Colonic mucosa (tissue), 4 donors: ENCODE measurements at regions of chr11 and their contacts with region 1.

Region 1: DNA sequence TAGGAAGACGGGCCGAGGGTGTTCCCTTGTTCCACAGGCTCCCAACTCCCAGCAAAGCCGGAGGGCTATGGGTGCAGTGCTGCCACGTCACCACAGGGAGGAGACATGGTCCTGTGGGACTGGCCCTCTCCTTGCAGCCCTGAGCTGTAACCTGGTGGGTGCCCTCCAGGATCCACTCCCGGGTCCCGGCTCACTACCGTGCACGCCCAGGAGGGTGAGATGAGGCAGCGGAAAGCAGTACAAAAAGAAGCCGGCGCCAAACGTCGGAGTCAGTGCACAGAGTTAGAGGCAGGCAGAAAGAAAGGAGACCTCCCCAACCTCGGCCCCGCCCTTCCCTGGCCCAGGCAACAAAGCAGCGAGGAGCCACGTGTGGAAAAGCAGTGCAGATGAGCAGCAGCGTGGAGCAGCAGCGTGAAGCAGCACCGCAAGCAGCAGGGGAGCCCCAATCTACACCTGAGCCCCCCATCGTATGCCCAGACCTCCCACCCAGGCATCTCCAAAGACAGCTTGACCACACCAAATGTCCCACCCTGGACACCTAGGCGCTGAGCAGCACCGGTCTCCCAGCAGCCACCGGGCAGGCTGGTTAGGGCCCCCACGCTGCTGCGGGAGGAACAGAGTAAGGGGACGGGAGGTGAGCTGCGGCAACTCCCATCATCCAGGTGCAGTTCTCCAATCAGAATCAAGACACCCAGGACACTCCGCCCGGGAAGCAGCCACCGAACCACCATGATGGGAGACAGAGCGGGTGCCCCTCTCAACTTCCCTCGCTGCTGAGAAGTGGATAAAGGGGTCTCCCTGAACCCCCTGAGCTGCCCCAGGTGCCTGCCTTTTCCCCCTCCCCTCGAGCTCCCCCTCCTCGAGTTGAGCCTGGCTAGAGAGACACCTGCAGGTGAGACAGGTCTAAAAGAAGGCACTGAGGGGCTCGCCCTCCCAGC is 28.8 kb downstream of the IGSF9B start:
- DNase-seq: peak; percentile 81
- H3K4me3 ChIP-seq: peak overlapping the region; percentile 28
- H3K27ac ChIP-seq: no peak overlapping the region
- H3K4me1 ChIP-seq: peaks cover 6% of the 10 kb centered on the region
- H3K27me3 ChIP-seq: no peaks in the 10 kb centered on the region
- CTCF ChIP-seq: peak; percentile 83

Region 2: GRCh38 chr11:133809569-133810491 is 118.1 kb before region 1 on chr11:
- intact Hi-C with region 1: no loop called
- DNase-seq: no peak
- H3K4me3 ChIP-seq: no peak overlapping the region
- H3K27ac ChIP-seq: no peak overlapping the region
- H3K4me1 ChIP-seq: no peaks in the 10 kb centered on the region
- H3K27me3 ChIP-seq: no peaks in the 10 kb centered on the region
- CTCF ChIP-seq: no peak

Region 3: DNA sequence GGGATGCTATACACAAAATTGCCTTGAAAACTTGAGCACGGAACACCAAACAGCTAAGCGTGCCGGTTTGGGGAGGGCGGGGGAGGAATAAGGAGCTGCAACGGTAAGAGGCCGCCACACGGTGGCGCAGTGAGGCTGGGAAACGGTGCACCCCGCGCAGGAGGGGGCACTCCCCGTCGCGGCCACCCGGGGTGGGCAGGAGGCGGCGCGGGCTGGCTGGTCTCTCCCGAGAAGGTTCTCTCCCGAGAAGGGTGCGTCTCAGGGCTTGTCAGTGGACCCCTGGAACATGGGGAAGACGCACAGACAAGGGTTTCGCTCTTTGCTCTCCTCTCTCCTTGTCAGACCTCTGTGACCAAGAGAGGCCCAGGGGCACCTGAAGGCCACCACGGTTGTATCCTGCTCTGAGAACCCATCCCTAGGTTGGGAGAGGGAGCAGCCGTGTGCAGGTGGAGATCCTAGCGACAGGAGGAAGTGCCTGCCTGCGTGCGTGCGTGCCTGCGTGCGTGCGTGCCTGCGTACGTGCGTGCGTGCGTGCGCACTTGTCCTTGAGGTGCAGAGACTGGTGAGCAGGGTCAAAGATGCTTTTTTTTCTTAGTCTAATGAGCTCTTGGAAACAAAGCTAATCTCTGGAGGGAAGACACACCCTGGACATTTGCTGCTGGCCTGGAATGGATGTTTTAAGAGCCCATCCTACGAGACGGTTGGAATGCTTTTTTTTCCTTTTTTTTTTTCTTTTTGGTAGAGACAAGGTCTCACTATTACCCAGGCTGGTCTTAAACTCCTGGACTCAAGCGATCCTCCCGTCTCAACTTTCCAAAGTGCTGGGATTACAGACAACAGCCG is 122.8 kb after region 1 on chr11:
- intact Hi-C with region 1: loop called (anchors 10 kb)
- DNase-seq: peak; percentile 87
- H3K4me3 ChIP-seq: peak overlapping the region; percentile 25
- H3K27ac ChIP-seq: peak overlapping the region; percentile 52
- H3K4me1 ChIP-seq: no peaks in the 10 kb centered on the region
- H3K27me3 ChIP-seq: no peaks in the 10 kb centered on the region
- CTCF ChIP-seq: peak; percentile 91